B cell (primary cell): ENCODE measurements at regions of chr18 and their contacts with region 1.

Region 1: DNA sequence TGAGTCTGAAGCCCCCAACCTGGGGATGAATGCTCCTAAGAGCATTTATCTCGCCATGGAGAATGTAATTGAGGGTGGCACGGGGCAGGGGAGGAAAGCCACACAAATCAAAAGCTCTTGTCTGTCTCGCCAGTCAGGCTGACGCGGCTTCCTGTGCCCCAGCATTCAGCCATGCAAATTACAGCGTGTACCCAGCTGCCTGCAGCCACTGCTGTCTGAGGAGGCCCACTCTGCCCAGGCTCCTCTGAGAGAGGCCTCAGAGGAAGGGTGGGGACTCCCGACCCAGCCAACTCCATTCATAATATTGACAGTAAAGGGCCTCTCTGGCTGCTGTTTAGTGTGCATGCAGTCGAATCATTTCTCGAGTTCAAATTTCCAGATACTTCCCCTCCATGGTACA is 22.0 kb downstream of the SMAD7 start:
- DNase-seq: peak; percentile 91
- ATAC-seq: peak; percentile 92
- H3K4me3 ChIP-seq: peak overlapping the region in 4 of 5 experiments; percentile 13 to 41 (median 28)
- H3K4me3 Mint-ChIP-seq: peak overlapping the region; percentile 64
- H3K27ac ChIP-seq: peak overlapping the region; percentile 41 to 93
- H3K27ac Mint-ChIP-seq: peak overlapping the region; percentile 90
- H3K4me1 ChIP-seq: peaks cover 71 to 89% of the 10 kb centered on the region in 2 donors
- H3K4me1 Mint-ChIP-seq: peaks cover 91% of the 10 kb centered on the region
- H3K27me3 ChIP-seq: no peaks in the 10 kb centered on the region
- H3K27me3 Mint-ChIP-seq: no peaks in the 10 kb centered on the region
- CTCF ChIP-seq: no peak

Region 2: GRCh38 chr18:48868468-48869466 is 60.0 kb before region 1 on chr18:
- CTCF ChIA-PET with region 1: interaction called, 3 read pairs
- POLR2A ChIA-PET with region 1: interaction called, 3 read pairs
- intact Hi-C with region 1: loop called (anchors 1 kb)
- DNase-seq: peak; percentile 94
- ATAC-seq: peak; percentile 94
- H3K4me3 ChIP-seq: no peak overlapping the region
- H3K4me3 Mint-ChIP-seq: peak overlapping the region; percentile 51
- H3K27ac ChIP-seq: peak overlapping the region; percentile 67 to 78
- H3K27ac Mint-ChIP-seq: peak overlapping the region; percentile 94
- H3K4me1 ChIP-seq: peaks cover 17 to 26% of the 10 kb centered on the region in 2 donors
- H3K4me1 Mint-ChIP-seq: peaks cover 17% of the 10 kb centered on the region
- H3K27me3 ChIP-seq: no peaks in the 10 kb centered on the region
- H3K27me3 Mint-ChIP-seq: no peaks in the 10 kb centered on the region
- CTCF ChIP-seq: no peak

Region 3: GRCh38 chr18:48896690-48897511 is 31.9 kb before region 1 on chr18:
- CTCF ChIA-PET with region 1: no interaction called
- POLR2A ChIA-PET with region 1: interaction called, 3 read pairs
- intact Hi-C with region 1: loop called (anchors 1 kb)
- DNase-seq: peak; percentile 70
- ATAC-seq: peak; percentile 84
- H3K4me3 ChIP-seq: no peak overlapping the region
- H3K4me3 Mint-ChIP-seq: peak overlapping the region; percentile 34
- H3K27ac ChIP-seq: peak overlapping the region in 1 of 2 donors; percentile 24
- H3K27ac Mint-ChIP-seq: peak overlapping the region; percentile 84
- H3K4me1 ChIP-seq: peaks cover 14 to 16% of the 10 kb centered on the region in 2 donors
- H3K4me1 Mint-ChIP-seq: peaks cover 18% of the 10 kb centered on the region
- H3K27me3 ChIP-seq: no peaks in the 10 kb centered on the region
- H3K27me3 Mint-ChIP-seq: no peaks in the 10 kb centered on the region
- CTCF ChIP-seq: no peak

Region 4: GRCh38 chr18:48940854-48941611 is 12.2 kb after region 1 on chr18:
- CTCF ChIA-PET with region 1: interaction called, 4 read pairs
- POLR2A ChIA-PET with region 1: interaction called, 12 read pairs
- intact Hi-C with region 1: loop called (anchors 1 kb)
- DNase-seq: peak; percentile 92
- ATAC-seq: peak; percentile 82
- H3K4me3 ChIP-seq: peak overlapping the region in 4 of 5 experiments; percentile 28 to 52 (median 38)
- H3K4me3 Mint-ChIP-seq: peak overlapping the region; percentile 79
- H3K27ac ChIP-seq: peak overlapping the region; percentile 71 to 94
- H3K27ac Mint-ChIP-seq: peak overlapping the region; percentile 94
- H3K4me1 ChIP-seq: peaks cover 33 to 55% of the 10 kb centered on the region in 2 donors
- H3K4me1 Mint-ChIP-seq: peaks cover 74% of the 10 kb centered on the region
- H3K27me3 ChIP-seq: no peaks in the 10 kb centered on the region
- H3K27me3 Mint-ChIP-seq: no peaks in the 10 kb centered on the region
- CTCF ChIP-seq: no peak

Region 5: DNA sequence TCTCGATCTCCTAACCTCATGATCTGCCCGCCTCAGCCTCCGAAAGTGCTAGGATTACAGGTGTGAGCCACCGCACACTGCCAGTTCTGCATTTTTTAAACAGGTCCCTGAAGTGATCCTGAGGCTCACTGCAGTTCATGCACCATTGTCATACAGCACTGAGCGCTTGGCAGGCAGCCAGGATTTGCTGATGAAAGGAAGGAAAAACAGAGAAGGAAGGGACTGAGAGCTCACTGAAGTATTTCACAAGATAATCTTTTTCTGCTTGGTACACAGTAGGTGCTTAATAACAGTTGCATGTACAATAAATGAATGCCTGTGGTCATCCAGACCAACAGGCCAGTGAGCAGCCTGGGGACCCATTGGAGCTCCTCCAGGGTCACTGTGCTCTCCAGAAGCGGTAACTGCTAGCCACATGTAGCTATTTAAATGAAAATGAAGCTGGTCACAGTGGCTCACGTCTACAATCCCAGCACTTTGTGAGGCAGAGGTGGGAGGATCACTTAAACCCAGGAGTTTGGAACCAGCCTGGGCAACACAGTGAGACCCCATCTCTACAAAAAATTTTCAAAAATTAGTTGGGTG is 55.1 kb after region 1 on chr18:
- CTCF ChIA-PET with region 1: no interaction called
- POLR2A ChIA-PET with region 1: no interaction called
- intact Hi-C with region 1: no loop called
- DNase-seq: no peak
- ATAC-seq: no peak
- H3K4me3 ChIP-seq: no peak overlapping the region
- H3K4me3 Mint-ChIP-seq: no peak overlapping the region
- H3K27ac ChIP-seq: no peak overlapping the region
- H3K27ac Mint-ChIP-seq: no peak overlapping the region
- H3K4me1 ChIP-seq: no peaks in the 10 kb centered on the region
- H3K4me1 Mint-ChIP-seq: no peaks in the 10 kb centered on the region
- H3K27me3 ChIP-seq: peaks cover 0 to 16% (median 2%) of the 10 kb centered on the region in 4 experiments
- H3K27me3 Mint-ChIP-seq: peaks cover 28% of the 10 kb centered on the region
- CTCF ChIP-seq: no peak